Right ventricle myocardium inferior (tissue), 1 donor: ENCODE measurements at regions of chr19 and their contacts with region 1.

Region 1: GRCh38 chr19:41397086-41398049 is at the starts of genes BCKDHA and EXOSC5:
- DNase-seq: peak; percentile 99
- ATAC-seq: peak; percentile 98
- total RNA-seq, gene BCKDHA: 44.9 TPM
- total RNA-seq, gene EXOSC5: 17.1 TPM

Region 2: GRCh38 chr19:41363753-41364523 is 33.4 kb before region 1 on chr19 and contains the start of gene B9D2:
- intact Hi-C with region 1: loop called (anchors 1 kb)
- DNase-seq: peak; percentile 98
- ATAC-seq: peak; percentile 97
- total RNA-seq, gene B9D2: 3.2 TPM